ENCODE measurements at regions of chr22 and their contacts with region 1.

Region 1: DNA sequence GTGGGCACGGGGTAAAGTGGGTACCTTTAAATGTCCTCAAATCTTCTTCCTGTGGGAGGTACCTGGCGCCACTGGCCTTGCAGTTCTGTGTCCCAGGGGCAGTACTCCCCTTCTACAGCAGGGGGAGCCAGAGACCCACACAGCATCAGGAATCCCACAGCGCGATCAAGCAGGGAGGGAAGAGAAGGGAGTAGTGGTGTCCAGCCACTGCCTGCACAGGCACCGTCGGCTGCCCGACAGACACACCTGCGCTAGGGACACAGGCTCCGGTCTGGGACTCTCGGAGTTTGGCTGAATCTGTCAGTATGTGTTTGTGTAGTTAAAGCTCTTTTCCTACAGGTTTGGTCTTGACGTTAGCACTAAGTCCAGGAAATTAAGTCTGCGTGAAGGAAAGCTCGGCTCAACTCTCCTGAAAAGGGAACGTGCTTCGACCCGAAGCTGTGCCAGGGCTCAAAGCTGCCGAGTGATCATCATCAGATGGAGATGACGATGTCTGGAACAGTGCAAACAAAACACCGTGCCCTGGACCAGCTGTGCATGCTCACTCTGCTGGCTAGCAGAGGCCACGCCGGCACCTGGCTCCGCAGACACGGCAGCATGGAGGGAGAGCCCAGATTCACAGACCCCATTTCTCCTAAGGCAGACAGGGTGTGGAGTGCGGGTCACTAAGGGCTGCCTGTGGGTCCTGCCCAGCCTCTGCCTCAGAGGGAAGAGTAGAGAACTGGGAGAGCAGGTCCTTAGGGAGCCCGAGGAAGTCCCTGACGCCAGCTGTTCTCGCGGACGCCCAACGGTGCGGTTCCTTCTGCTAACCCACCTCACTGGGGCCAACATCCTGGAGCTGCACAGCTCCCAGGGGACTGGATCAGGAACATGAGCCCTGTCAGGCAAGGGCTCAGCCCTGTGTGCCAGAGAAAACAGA is 56.0 kb upstream of the BID start:
- DNase-seq: peak; percentile 98
- H3K4me3 ChIP-seq: no peak overlapping the region
- H3K27ac ChIP-seq: peak overlapping the region; percentile 76 to 88 (median 85)
- H3K4me1 ChIP-seq: peaks cover 38 to 55% (median 48%) of the 10 kb centered on the region in 4 donors
- H3K27me3 ChIP-seq: no peaks in the 10 kb centered on the region
- CTCF ChIP-seq: peak; percentile 99 to 100 (median 100)
- EP300 ChIP-seq: peak; percentile 14
- POLR2A ChIP-seq: no peak

Region 2: GRCh38 chr22:17891481-17892167 is 61.3 kb after region 1 on chr22:
- intact Hi-C with region 1: loop called (anchors 2 kb)
- DNase-seq: no peak
- H3K4me3 ChIP-seq: no peak overlapping the region
- H3K27ac ChIP-seq: peak overlapping the region; percentile 69 to 82 (median 78)
- H3K4me1 ChIP-seq: peaks cover 25 to 38% (median 31%) of the 10 kb centered on the region in 4 donors
- H3K27me3 ChIP-seq: no peaks in the 10 kb centered on the region
- CTCF ChIP-seq: peak; percentile 61 to 67 (median 63)
- EP300 ChIP-seq: no peak
- POLR2A ChIP-seq: no peak

Region 3: DNA sequence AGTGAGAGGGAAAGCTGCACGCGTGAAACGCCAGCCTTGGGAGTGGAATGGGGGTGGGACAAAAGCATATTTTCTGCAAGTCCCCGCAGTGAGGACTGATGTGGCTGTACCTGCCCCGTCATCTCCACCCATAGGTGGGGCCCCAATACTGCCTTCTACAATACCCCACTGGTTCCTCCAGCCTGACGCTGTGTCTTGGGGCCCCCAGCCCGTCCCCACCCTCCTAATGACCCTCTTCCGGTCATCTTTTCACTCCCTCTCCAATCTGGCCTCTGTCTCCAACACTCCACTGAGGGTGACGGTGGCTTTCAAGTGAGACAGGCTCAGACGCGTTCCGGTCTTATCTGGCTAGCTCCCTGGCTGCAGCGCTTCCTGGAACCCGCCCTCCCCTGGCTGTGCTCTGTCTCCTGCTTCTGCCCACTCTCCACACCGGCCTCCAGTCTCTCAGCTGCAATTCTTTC is 89.9 kb after region 1 on chr22:
- intact Hi-C with region 1: no loop called
- DNase-seq: no peak
- H3K4me3 ChIP-seq: no peak overlapping the region
- H3K27ac ChIP-seq: peak overlapping the region; percentile 15 to 68 (median 44)
- H3K4me1 ChIP-seq: peaks cover 61 to 82% (median 72%) of the 10 kb centered on the region in 4 donors
- H3K27me3 ChIP-seq: no peaks in the 10 kb centered on the region
- CTCF ChIP-seq: peak in 1 of 3 experiments; percentile 11
- EP300 ChIP-seq: no peak
- POLR2A ChIP-seq: no peak

Region 4: GRCh38 chr22:18001040-18001893 is 171.0 kb after region 1 on chr22:
- intact Hi-C with region 1: loop called (anchors 5 kb)
- DNase-seq: peak; percentile 95
- H3K4me3 ChIP-seq: peak overlapping the region; percentile 77 to 94 (median 89)
- H3K27ac ChIP-seq: peak overlapping the region; percentile 89 to 95 (median 92)
- H3K4me1 ChIP-seq: peaks cover 31 to 55% (median 50%) of the 10 kb centered on the region in 4 donors
- H3K27me3 ChIP-seq: no peaks in the 10 kb centered on the region
- CTCF ChIP-seq: peak; percentile 56 to 70 (median 59)
- EP300 ChIP-seq: no peak
- POLR2A ChIP-seq: peak; percentile 75

Region 5: DNA sequence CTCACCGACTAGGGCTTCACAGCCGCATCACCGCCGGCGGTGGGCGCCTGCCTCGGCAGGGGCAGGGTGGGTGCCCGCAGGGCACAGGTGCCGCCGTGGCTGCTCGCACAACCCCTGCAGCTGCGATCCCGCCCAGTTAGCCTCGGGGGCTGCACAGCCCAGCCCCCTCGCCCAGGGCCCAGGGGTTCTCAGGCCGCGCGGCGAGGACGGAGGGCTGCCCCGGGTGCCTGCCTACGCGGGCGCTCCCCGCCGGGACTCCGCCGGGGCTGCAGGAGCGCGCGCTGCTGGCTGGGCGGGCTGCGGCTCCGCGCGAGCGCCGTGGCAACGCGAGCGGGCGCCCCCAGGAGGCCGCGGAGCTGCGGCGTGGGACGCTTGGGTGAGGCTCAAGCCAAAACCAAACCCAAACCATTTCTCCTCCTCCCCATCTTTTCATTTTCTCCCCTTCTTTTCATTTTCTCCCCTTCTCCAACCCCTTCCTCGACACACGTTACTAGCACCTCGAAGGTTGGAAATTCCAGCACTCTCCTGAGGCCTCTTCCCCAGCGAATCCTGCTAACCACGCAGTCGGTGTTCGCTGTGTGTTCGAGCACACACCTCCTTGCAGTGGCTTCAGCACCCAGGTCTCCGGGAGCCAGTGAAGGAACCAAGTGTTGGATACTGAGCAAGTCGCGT is 194.1 kb after region 1 on chr22 and contains the start of gene MICAL3:
- intact Hi-C with region 1: loop called (anchors 2 kb)
- DNase-seq: no peak
- H3K4me3 ChIP-seq: peak within 1 kb of the TSS; percentile 67 to 78 (median 70)
- H3K27ac ChIP-seq: peak within 1 kb of the TSS; percentile 89 to 93 (median 90)
- H3K4me1 ChIP-seq: peaks cover 12 to 46% (median 33%) of the 10 kb centered on the region in 4 donors
- H3K27me3 ChIP-seq: no peaks in the 10 kb centered on the region
- CTCF ChIP-seq: peak; percentile 58 to 78 (median 74)
- EP300 ChIP-seq: no peak
- POLR2A ChIP-seq: no peak
- total RNA-seq, gene MICAL3: 35.1 to 91.8 (median 67.8) TPM

Measured in esophagus muscularis mucosa (tissue), 4 donors.